ENCODE measurements at regions of chr3 and their contacts with region 1.

Region 1: GRCh38 chr3:49802719-49803464 is at the start of gene INKA1:
- DNase-seq: peak; percentile 83 to 95
- ATAC-seq: peak; percentile 89 to 95 (median 90)
- H3K4me3 ChIP-seq: peak within 1 kb of the TSS; percentile 93
- H3K4me3 Mint-ChIP-seq: peak within 1 kb of the TSS; percentile 91
- H3K27ac ChIP-seq: peak within 1 kb of the TSS; percentile 85
- H3K27ac Mint-ChIP-seq: peak within 1 kb of the TSS; percentile 78 to 84
- H3K4me1 ChIP-seq: peaks cover 53% of the 10 kb centered on the region
- H3K4me1 Mint-ChIP-seq: peaks cover 13 to 31% of the 10 kb centered on the region in 2 donors
- H3K27me3 ChIP-seq: no peaks in the 10 kb centered on the region
- H3K27me3 Mint-ChIP-seq: peaks cover 12 to 14% of the 10 kb centered on the region in 2 donors
- CTCF ChIP-seq: peak; percentile 82
- total RNA-seq, gene INKA1: 0.52 to 0.83 TPM in 2 of 3 donors, not detected in the other

Region 2: DNA sequence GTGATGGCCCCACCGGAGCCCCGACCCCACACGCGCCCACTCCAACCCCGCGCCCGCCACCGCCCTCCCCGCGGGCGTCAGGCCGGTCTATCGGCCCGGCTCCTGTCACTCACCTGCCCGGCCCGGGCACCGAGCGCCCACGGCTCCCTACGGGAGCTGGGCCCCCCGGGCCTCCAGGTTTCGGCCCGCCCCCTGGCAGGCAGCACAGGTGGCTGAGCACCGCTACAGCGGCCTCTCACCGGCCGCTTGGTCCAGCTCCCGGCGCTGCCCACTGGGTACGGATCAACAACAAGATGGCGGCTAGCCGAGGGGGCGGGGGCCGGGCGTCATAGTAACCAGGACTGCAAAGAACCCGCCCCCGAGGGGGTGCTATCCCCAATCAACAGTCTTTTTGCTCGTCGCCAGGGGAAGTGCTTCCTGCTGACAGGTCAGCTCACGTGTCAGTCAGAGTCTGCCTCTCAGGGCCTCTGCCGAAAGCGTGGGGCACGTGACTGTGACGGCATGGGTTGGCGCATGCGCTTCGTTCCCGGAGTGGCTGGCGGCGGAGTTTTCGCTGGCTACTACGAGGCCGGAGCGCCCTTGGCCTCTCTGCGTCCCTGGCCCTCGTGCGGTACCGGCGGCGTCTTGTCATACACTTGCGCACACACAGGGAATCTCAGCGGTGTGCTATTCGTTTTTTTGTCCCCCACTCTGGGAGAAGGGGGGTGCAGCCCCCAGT is 16.5 kb before region 1 on chr3 and contains the start of gene IP6K1:
- intact Hi-C with region 1: loop called (anchors 2 kb)
- DNase-seq: peak; percentile 99 to 100
- ATAC-seq: peak; percentile 98 to 100 (median 99)
- H3K4me3 ChIP-seq: peak within 1 kb of the TSS; percentile 65
- H3K4me3 Mint-ChIP-seq: peak within 1 kb of the TSS; percentile 92
- H3K27ac ChIP-seq: peak within 1 kb of the TSS; percentile 94
- H3K27ac Mint-ChIP-seq: peak within 1 kb of the TSS; percentile 97 to 98
- H3K4me1 ChIP-seq: peaks cover 35% of the 10 kb centered on the region
- H3K4me1 Mint-ChIP-seq: peaks cover 19 to 22% of the 10 kb centered on the region in 2 donors
- H3K27me3 ChIP-seq: no peaks in the 10 kb centered on the region
- H3K27me3 Mint-ChIP-seq: peaks cover 0 to 5% of the 10 kb centered on the region in 2 donors
- CTCF ChIP-seq: no peak
- total RNA-seq, gene IP6K1: 53.7 to 68.7 (median 57.9) TPM

Region 3: GRCh38 chr3:49813497-49814174 is 10.7 kb after region 1 on chr3 and contains the start of gene UBA7:
- intact Hi-C with region 1: loop called (anchors 1 kb)
- DNase-seq: peak; percentile 29 to 71
- ATAC-seq: peak; percentile 87 to 96 (median 95)
- H3K4me3 ChIP-seq: peak within 1 kb of the TSS; percentile 44
- H3K4me3 Mint-ChIP-seq: peak within 1 kb of the TSS; percentile 91
- H3K27ac ChIP-seq: peak within 1 kb of the TSS; percentile 77
- H3K27ac Mint-ChIP-seq: peak within 1 kb of the TSS; percentile 91 to 93
- H3K4me1 ChIP-seq: peaks cover 29% of the 10 kb centered on the region
- H3K4me1 Mint-ChIP-seq: peaks cover 28 to 29% of the 10 kb centered on the region in 2 donors
- H3K27me3 ChIP-seq: no peaks in the 10 kb centered on the region
- H3K27me3 Mint-ChIP-seq: no peaks in the 10 kb centered on the region
- CTCF ChIP-seq: no peak
- total RNA-seq, gene UBA7: 283 to 358 (median 336) TPM

Region 4: GRCh38 chr3:49839193-49839809 is 36.4 kb after region 1 on chr3:
- intact Hi-C with region 1: loop called (anchors 1 kb)
- DNase-seq: peak; percentile 72 to 93
- ATAC-seq: peak; percentile 89 to 99 (median 97)
- H3K4me3 ChIP-seq: no peak overlapping the region
- H3K4me3 Mint-ChIP-seq: no peak overlapping the region
- H3K27ac ChIP-seq: no peak overlapping the region
- H3K27ac Mint-ChIP-seq: no peak overlapping the region
- H3K4me1 ChIP-seq: no peaks in the 10 kb centered on the region
- H3K4me1 Mint-ChIP-seq: no peaks in the 10 kb centered on the region
- H3K27me3 ChIP-seq: no peaks in the 10 kb centered on the region
- H3K27me3 Mint-ChIP-seq: no peaks in the 10 kb centered on the region
- CTCF ChIP-seq: peak; percentile 76

Region 5: DNA sequence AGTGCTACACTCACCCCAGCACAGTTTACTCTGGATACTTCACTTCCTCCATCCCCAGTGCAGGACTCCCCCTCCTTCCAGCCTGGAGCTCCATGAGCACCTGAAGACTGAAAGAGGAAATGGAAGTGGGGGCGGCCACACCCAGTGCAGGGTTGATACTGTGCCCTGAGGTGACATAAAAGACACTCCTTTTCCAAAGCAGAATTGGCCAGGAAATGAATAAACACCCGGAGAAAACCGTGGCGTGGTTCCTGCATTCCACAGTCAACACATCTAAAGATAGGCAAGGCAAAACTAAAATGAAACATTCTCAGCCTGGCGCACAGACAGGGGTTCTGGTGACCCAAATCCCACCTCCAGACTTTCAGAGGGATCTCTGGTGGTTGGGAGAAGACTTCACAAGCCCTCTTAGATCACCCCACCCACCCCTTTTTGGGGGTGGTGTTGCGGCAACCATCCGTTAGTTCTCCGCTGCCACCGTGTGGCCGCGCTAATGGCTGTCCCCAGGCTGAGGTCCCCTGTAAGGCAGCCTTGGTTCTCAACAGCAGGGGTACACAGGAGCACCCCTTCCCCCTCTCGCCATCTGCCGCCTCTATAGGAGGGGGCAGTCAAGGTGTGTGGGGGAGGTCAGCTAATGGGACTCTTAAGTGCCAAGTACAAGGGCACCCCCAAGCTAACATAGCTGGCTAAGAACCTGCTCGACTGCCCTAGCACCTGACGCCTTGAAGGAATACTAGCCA is 103.3 kb after region 1 on chr3:
- intact Hi-C with region 1: loop called (anchors 2 kb)
- DNase-seq: peak; percentile 28 to 72
- ATAC-seq: peak in 2 of 3 donors; percentile 30 to 38
- H3K4me3 ChIP-seq: no peak overlapping the region
- H3K4me3 Mint-ChIP-seq: peak overlapping the region; percentile 21
- H3K27ac ChIP-seq: no peak overlapping the region
- H3K27ac Mint-ChIP-seq: peak overlapping the region in 1 of 2 donors; percentile 71
- H3K4me1 ChIP-seq: peaks cover 36% of the 10 kb centered on the region
- H3K4me1 Mint-ChIP-seq: peaks cover 11 to 26% of the 10 kb centered on the region in 2 donors
- H3K27me3 ChIP-seq: no peaks in the 10 kb centered on the region
- H3K27me3 Mint-ChIP-seq: no peaks in the 10 kb centered on the region
- CTCF ChIP-seq: peak; percentile 47

Region 6: DNA sequence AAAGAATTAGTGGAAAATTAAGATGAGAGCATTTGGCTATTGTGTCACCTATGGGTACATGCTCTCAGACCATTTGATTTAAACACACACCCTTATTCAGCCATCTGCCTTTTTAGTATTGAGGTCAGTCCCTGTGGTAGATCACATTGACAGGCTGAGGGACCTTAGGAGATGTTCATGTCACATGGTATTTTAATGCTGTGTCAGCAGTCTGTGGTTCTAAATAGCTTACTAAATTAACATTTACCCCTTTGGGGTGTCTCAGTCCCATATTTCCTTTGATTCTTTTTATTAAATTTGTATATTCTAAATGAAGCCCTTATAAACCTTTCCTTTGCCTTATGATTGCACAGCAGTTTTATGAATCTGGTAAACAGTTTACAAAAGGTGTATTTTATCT is 288.1 kb after region 1 on chr3:
- intact Hi-C with region 1: loop called (anchors 5 kb)
- DNase-seq: no peak
- ATAC-seq: no peak
- H3K4me3 ChIP-seq: no peak overlapping the region
- H3K4me3 Mint-ChIP-seq: peak overlapping the region; percentile 95
- H3K27ac ChIP-seq: no peak overlapping the region
- H3K27ac Mint-ChIP-seq: peak overlapping the region; percentile 93 to 96
- H3K4me1 ChIP-seq: peaks cover 12% of the 10 kb centered on the region
- H3K4me1 Mint-ChIP-seq: peaks cover 34 to 43% of the 10 kb centered on the region in 2 donors
- H3K27me3 ChIP-seq: no peaks in the 10 kb centered on the region
- H3K27me3 Mint-ChIP-seq: no peaks in the 10 kb centered on the region
- CTCF ChIP-seq: no peak

Measured in natural killer cell (primary cell).